Psoas muscle (tissue), 8 donors: ENCODE measurements at regions of chr2 and their contacts with region 1.

Region 1: DNA sequence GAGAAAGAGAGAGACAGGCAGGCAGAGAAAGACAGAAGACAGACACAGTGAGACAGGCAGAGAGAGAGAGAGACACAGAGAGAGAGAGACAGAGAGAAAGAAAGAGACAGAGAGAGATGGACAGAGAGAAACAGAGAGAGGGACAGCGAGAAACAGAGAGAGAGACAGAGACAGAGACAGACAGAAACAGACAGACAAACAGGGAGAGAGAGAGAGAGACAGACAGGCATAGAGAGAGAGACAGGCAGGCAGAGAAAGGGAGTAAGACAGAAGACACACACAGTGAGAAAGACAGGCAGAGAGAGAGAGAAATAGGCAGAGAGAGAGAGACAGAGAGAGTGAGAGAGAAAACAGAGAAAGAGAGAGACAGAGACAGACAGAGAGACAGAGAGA is 105.3 kb upstream of the ANKRD30BL start:
- DNase-seq: no peak
- ATAC-seq: no peak
- H3K4me3 ChIP-seq: no peak overlapping the region
- H3K27ac ChIP-seq: no peak overlapping the region
- H3K4me1 ChIP-seq: peaks cover 3% of the 10 kb centered on the region
- H3K27me3 ChIP-seq: peaks cover 0 to 20% (median 0%) of the 10 kb centered on the region in 3 donors
- CTCF ChIP-seq: no peak

Region 2: GRCh38 chr2:133844214-133844892 is 1577.3 kb after region 1 on chr2:
- intact Hi-C with region 1: loop called in 1 of 2 experiments (anchors 10 kb)
- DNase-seq: peak; percentile 35 to 68
- ATAC-seq: peak; percentile 56 to 83 (median 65)
- H3K4me3 ChIP-seq: no peak overlapping the region
- H3K27ac ChIP-seq: no peak overlapping the region
- H3K4me1 ChIP-seq: no peaks in the 10 kb centered on the region
- H3K27me3 ChIP-seq: no peaks in the 10 kb centered on the region
- CTCF ChIP-seq: peak; percentile 85